ENCODE measurements at regions of chrX and their contacts with region 1.

Region 1: GRCh38 chrX:41333744-41334259 is at the start of gene DDX3X:
- DNase-seq: peak; percentile 89
- ATAC-seq: peak; percentile 81
- H3K4me3 ChIP-seq: peak within 1 kb of the TSS; percentile 59
- H3K27ac ChIP-seq: peak within 1 kb of the TSS; percentile 98
- H3K4me1 ChIP-seq: peaks cover under 1% of the 10 kb centered on the region
- H3K27me3 ChIP-seq: no peaks in the 10 kb centered on the region
- CTCF ChIP-seq: peak; percentile 12
- total RNA-seq, gene DDX3X: 234 TPM

Region 2: DNA sequence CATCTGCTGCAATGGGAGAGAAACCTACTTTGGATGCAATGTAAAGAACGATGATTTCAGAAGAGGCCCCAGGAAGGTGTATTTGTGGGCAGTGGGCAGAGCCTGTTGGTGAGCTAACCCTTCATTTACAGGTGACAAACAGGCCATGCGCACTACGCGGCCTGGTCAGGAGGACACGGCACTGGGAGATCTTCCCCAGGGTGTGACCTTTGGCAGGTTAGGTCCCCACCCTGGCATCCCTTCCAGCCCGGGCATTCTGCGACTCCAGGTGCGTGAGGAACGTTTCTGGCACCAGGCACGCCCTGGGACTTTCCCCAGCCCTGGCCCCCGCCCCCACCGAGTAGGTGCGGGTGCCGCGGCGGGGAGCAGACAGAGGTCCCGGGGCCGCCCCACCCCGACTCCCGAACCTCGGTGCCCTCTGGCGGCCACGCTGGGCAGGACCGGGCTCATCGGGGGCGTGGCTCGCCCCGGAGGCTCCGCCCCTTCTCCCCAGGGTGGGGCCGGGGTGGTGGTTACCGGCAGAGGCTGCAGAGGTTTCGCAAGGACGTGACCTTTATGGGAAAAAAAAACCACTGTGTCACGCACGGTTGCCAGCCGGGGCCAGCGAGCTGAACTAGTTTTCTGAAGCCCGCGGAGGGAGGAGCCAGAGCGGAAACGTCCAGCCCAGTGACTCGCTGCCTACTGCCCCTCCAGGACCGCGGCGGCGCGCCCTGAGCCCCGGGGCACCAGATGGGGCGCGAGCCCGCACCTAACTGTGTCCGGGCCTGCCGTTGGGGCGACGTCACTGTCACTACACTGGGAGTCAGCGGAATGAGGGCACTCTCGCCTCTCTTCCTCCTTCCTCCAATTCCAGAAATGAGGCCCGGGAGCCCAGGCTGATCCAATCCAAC is 108.4 kb after region 1 on chrX:
- intact Hi-C with region 1: loop called (anchors 10 kb)
- DNase-seq: peak; percentile 93
- ATAC-seq: peak; percentile 99
- H3K4me3 ChIP-seq: peak overlapping the region; percentile 30
- H3K27ac ChIP-seq: peak overlapping the region; percentile 82
- H3K4me1 ChIP-seq: no peaks in the 10 kb centered on the region
- H3K27me3 ChIP-seq: no peaks in the 10 kb centered on the region
- CTCF ChIP-seq: peak; percentile 66

Measured in upper lobe of right lung (tissue), 1 donor.